Activated CD8-positive, alpha-beta T cell treated with anti-CD3 and anti-CD28 coated beads, Interleukin-2, amount 10 ng/mL, durations not matched to agents 7 days and 5 days (primary cell): ENCODE measurements at regions of chr18 and their contacts with region 1.

Region 1: GRCh38 chr18:51278045-51278649 is 80.7 kb upstream of the MEX3C start:
- DNase-seq: peak; percentile 73
- ATAC-seq: peak; percentile 73
- H3K4me3 Mint-ChIP-seq: no peak overlapping the region
- H3K27ac Mint-ChIP-seq: no peak overlapping the region
- H3K4me1 Mint-ChIP-seq: no peaks in the 10 kb centered on the region
- H3K27me3 Mint-ChIP-seq: peaks cover 6% of the 10 kb centered on the region

Region 2: GRCh38 chr18:51266773-51267172 is 11.4 kb before region 1 on chr18:
- CTCF ChIA-PET with region 1: interaction called, 10 read pairs
- POLR2A ChIA-PET with region 1: no interaction called
- DNase-seq: no peak
- ATAC-seq: no peak
- H3K4me3 Mint-ChIP-seq: no peak overlapping the region
- H3K27ac Mint-ChIP-seq: no peak overlapping the region
- H3K4me1 Mint-ChIP-seq: no peaks in the 10 kb centered on the region
- H3K27me3 Mint-ChIP-seq: peaks cover 4% of the 10 kb centered on the region

Region 3: DNA sequence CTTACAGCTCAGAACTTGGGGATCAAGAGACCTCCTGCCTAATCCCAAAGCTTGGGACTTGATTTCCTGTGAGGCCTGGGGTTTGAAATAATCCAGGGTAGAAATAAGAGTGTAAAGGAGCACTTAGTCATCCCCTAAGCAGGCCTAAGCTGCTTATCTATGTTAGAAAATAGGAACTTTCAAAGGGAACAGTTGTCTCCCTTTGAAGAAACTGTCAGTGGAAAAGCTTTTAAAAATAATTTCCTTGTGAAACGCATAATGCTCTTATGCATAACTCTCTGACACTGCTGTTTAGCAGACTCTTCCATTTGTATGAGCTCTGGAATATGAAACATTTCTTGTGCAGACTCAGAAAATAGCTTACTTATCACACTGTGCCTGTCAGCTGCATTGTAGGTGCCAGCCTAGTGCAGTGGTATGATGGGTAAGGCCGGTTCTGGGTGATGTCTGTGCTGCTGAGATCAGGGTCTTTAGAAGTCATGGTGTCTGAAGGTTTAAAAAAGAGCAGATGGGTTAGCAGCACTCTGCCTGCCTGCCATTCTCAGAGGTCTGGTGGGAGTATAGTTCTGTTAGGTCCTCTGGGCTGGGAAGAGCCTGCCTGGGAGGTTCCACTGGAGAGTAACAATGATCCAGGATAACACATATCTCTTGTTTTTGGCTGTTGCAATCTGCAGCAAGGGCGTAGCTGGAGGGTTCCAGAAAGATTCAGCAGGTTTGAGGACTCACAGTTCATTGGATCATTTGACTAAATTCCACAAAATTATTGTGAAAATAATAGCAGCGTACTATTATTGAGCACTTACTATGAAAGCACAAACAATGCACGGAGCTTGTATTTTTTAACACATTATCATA is 202.5 kb after region 1 on chr18:
- CTCF ChIA-PET with region 1: no interaction called
- POLR2A ChIA-PET with region 1: no interaction called
- DNase-seq: no peak
- ATAC-seq: no peak
- H3K4me3 Mint-ChIP-seq: no peak overlapping the region
- H3K27ac Mint-ChIP-seq: no peak overlapping the region
- H3K4me1 Mint-ChIP-seq: no peaks in the 10 kb centered on the region
- H3K27me3 Mint-ChIP-seq: peaks cover 11% of the 10 kb centered on the region